Activated CD8-positive, alpha-beta T cell treated with anti-CD3 and anti-CD28 coated beads for 36 hours (primary cell): ENCODE measurements at regions of chr12 and their contacts with region 1.

Region 1: GRCh38 chr12:129911428-129912049 is 7.7 kb upstream of the TMEM132D start:
- DNase-seq: peak; percentile 43
- ATAC-seq: no peak
- H3K4me3 Mint-ChIP-seq: no peak overlapping the region
- H3K27ac Mint-ChIP-seq: no peak overlapping the region
- H3K4me1 Mint-ChIP-seq: no peaks in the 10 kb centered on the region
- H3K27me3 Mint-ChIP-seq: peaks cover 4% of the 10 kb centered on the region
- CTCF ChIP-seq: peak; percentile 68

Region 2: DNA sequence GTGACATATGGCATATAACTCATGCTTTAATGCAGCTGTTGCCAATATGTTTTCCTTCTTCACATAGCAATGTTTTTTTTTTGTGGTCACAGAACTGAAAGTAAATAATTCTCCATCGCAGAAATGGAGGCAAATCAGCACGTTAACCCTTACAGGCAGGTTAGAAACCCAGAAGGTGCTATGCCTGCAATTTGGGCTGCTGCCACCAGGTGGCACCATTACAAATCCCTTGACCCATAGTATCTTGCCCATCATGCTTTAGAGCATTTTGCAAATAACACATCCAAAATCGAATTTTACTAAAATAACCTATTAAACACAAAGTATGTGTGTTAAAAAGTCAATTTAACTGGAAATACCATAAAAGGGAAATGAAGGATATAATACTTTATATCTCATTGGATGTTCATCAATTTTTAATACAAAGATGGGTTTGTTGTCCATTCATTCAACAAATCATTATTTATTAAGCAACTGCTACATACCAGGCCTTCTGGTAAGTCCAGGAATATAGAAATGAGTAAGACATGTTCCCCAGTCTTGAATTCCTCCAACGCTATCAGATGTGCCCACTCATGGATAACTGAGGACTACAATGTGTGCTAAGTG is 718.2 kb before region 1 on chr12:
- CTCF ChIA-PET with region 1: no interaction called
- POLR2A ChIA-PET with region 1: no interaction called
- intact Hi-C with region 1: loop called (anchors 5 kb)
- DNase-seq: peak; percentile 42
- ATAC-seq: no peak
- H3K4me3 Mint-ChIP-seq: no peak overlapping the region
- H3K27ac Mint-ChIP-seq: no peak overlapping the region
- H3K4me1 Mint-ChIP-seq: no peaks in the 10 kb centered on the region
- H3K27me3 Mint-ChIP-seq: no peaks in the 10 kb centered on the region
- CTCF ChIP-seq: peak; percentile 85